ENCODE measurements at regions of chr2 and their contacts with region 1.

Region 1: GRCh38 chr2:203782262-203782976 is 76.0 kb downstream of the CD28 start:
- DNase-seq: peak; percentile 86
- H3K4me3 Mint-ChIP-seq: no peak overlapping the region
- H3K27ac Mint-ChIP-seq: peak overlapping the region; percentile 64
- H3K4me1 Mint-ChIP-seq: peaks cover 50% of the 10 kb centered on the region
- H3K27me3 Mint-ChIP-seq: no peaks in the 10 kb centered on the region

Region 2: GRCh38 chr2:203535078-203535783 is 247.2 kb before region 1 on chr2 and contains the start of gene RAPH1:
- CTCF ChIA-PET with region 1: no interaction called
- intact Hi-C with region 1: loop called (anchors 2 kb)
- DNase-seq: peak; percentile 79
- H3K4me3 Mint-ChIP-seq: peak within 1 kb of the TSS; percentile 82
- H3K27ac Mint-ChIP-seq: peak within 1 kb of the TSS; percentile 61
- H3K4me1 Mint-ChIP-seq: peaks cover 21% of the 10 kb centered on the region
- H3K27me3 Mint-ChIP-seq: peaks cover 6% of the 10 kb centered on the region
- total RNA-seq, gene RAPH1: 8.6 to 11.9 TPM

Region 3: DNA sequence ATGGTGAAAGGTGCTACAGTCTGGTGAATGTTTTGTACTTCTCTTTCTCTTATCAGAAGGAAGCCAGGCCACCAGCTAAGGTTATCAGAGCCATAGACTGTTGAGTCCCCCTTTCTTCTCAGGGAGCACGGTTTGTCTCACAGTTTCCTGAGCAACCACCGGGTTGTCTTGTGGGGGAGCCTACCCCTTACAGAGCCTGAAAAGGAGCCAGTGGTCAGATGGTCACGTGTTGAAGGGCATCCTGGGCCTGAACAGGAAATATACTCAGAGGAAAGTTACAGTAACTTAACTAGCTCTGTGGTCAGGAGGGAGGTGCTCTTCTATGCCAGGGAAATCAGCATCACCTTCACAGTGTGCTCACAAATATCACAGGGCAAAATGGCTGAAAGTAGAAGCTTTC is 64.3 kb before region 1 on chr2:
- CTCF ChIA-PET with region 1: interaction called, 18 read pairs
- intact Hi-C with region 1: loop called (anchors 1 kb)
- DNase-seq: peak; percentile 75
- H3K4me3 Mint-ChIP-seq: peak overlapping the region; percentile 60
- H3K27ac Mint-ChIP-seq: peak overlapping the region; percentile 95
- H3K4me1 Mint-ChIP-seq: peaks cover 97% of the 10 kb centered on the region
- H3K27me3 Mint-ChIP-seq: no peaks in the 10 kb centered on the region

Region 4: DNA sequence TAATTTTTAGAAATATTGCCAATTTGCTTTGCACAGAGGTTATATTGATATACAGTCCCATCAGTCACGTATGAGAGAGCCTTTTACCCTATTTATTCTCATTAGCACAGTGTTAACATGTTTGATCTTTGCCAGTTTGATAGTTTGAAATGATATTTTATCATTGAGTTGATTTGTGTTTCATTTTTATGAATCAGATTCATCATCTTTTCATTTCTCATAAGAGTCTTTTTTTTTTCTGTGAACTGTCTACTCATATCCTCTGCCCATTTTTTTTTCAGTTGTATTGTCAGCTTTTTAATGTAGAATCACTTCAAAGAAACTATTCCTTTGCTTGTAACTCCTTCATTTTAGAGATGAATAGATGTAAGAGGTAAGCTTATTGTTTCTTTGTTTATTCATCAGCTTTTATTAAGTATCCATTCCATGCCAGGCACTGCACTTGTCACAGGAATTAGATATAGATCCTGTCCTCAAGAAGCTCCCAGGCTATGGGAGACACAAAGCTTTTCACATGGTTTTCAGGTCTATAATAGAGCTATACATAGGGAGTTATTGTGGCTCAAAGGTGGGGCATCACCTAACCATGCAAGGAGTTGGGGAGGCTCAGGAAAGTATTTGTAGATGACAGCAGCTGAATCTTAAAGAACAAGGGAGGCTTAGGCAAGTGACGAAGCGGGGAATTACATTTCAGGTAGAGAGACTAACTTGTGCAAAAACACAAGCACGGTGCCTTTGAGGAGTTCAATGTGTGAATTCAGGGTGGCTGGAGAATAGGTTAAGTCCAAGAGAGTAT is 33.9 kb before region 1 on chr2:
- CTCF ChIA-PET with region 1: interaction called, 4 read pairs
- intact Hi-C with region 1: loop called (anchors 1 kb)
- DNase-seq: peak; percentile 67
- H3K4me3 Mint-ChIP-seq: peak overlapping the region; percentile 32
- H3K27ac Mint-ChIP-seq: peak overlapping the region; percentile 89
- H3K4me1 Mint-ChIP-seq: peaks cover 79% of the 10 kb centered on the region
- H3K27me3 Mint-ChIP-seq: no peaks in the 10 kb centered on the region

Region 5: DNA sequence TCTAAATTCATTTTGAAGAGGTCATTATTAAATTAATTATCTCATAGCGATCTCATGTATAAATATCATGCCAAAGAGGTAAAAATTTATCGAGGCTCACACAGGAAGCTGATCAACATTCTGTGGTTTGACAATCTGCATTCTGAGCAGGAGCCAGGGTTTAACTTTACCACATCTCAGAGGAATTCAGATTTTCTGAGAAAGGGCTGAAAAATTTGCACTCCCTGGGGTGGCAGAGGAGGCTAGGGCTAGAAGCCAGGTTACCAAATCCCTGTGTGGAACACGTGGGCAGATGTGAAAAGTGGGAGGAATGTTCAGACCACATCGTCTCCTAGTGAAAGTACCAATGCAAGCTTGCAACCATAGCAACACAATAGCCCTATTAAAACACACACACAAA is 21.7 kb after region 1 on chr2:
- CTCF ChIA-PET with region 1: interaction called, 10 read pairs
- intact Hi-C with region 1: loop called (anchors 1 kb)
- DNase-seq: peak; percentile 55
- H3K4me3 Mint-ChIP-seq: no peak overlapping the region
- H3K27ac Mint-ChIP-seq: peak overlapping the region; percentile 27
- H3K4me1 Mint-ChIP-seq: peaks cover 75% of the 10 kb centered on the region
- H3K27me3 Mint-ChIP-seq: no peaks in the 10 kb centered on the region

Region 6: GRCh38 chr2:203830304-203831055 is 48.1 kb after region 1 on chr2:
- CTCF ChIA-PET with region 1: no interaction called
- intact Hi-C with region 1: no loop called
- DNase-seq: peak; percentile 74
- H3K4me3 Mint-ChIP-seq: peak overlapping the region; percentile 46
- H3K27ac Mint-ChIP-seq: peak overlapping the region; percentile 94
- H3K4me1 Mint-ChIP-seq: peaks cover 20% of the 10 kb centered on the region
- H3K27me3 Mint-ChIP-seq: no peaks in the 10 kb centered on the region

Region 7: DNA sequence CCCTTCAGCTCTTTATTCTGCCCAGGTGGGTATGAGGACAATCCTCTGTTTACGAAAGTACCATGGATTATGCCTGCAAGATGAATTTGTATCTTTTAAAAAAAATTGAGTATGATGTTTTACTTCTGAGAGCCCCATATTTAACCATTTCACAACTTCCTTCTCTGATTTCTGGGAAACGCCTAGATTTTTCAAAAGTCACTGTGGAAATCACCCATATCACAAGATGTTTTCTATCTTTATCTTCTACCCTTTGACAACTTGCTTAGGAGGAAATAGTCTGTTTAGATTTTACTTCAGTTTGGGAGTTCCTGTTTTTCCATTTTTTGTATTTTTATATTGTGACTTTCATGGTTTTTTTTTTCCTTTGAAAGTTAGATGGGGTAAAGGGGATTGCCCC is 207.1 kb after region 1 on chr2:
- CTCF ChIA-PET with region 1: no interaction called
- intact Hi-C with region 1: no loop called
- DNase-seq: no peak
- H3K4me3 Mint-ChIP-seq: no peak overlapping the region
- H3K27ac Mint-ChIP-seq: peak overlapping the region; percentile 80
- H3K4me1 Mint-ChIP-seq: peaks cover 14% of the 10 kb centered on the region
- H3K27me3 Mint-ChIP-seq: no peaks in the 10 kb centered on the region

Measured in activated naive CD4-positive, alpha-beta T cell treated with anti-CD3 and anti-CD28 coated beads for 36 hours (primary cell).